IMR-90 (cell line): ENCODE measurements at regions of chr6 and their contacts with region 1.

Region 1: DNA sequence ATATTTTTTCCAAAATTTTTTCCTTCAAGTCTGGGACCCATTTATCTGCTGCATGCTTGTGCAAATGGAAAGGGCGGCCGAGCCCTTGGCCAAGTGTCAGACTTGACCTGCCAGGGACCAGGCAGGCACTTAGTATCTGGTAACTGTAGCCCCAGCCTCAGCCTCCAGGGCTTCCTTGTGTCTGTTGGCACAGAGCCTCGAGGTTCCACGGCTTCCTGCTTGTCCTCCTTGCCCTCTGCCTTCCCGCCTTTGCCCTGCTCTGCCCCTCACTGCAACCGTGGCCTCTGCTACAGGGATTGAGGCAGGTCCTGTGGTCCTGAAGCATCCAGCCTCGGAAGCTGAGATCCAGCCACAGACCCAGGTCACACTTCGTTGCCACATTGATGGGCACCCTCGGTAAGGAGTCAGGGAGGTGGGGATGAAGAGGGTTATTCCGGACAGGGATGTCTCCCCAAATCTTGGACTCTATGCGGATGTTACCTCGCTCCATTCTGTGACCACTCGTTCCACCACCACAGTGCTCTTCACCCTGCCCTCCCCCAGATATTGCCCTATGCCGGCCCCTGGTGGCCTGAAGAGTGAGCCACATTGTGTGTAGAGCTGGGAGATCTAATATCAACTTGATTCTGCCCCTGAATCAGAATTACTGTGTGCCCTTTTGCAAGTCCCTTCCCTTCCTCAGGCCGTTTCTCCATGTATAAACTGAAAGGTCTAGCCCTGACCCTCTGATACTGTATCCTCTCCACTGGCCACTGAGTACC is 41.5 kb upstream of the SRF start:
- DNase-seq: peak; percentile 35
- ATAC-seq: peak; percentile 82
- H3K4me3 ChIP-seq: no peak overlapping the region
- H3K27ac ChIP-seq: no peak overlapping the region
- H3K4me1 ChIP-seq: peaks cover 26% of the 10 kb centered on the region
- H3K27me3 ChIP-seq: no peaks in the 10 kb centered on the region
- CTCF ChIP-seq: peak; percentile 77
- POLR2A ChIP-seq: no peak
- RAD21 ChIP-seq: peak; percentile 91

Region 2: GRCh38 chr6:43070028-43070632 is 59.5 kb before region 1 on chr6:
- CTCF ChIA-PET with region 1: interaction called, 4 read pairs
- POLR2A ChIA-PET with region 1: no interaction called
- dilution Hi-C with region 1: no loop called
- in situ Hi-C with region 1: loop called (anchors 5 kb)
- intact Hi-C with region 1: loop called (anchors 1 kb)
- DNase-seq: peak; percentile 76
- ATAC-seq: peak; percentile 89
- H3K4me3 ChIP-seq: no peak overlapping the region
- H3K27ac ChIP-seq: no peak overlapping the region
- H3K4me1 ChIP-seq: peaks cover 12% of the 10 kb centered on the region
- H3K27me3 ChIP-seq: no peaks in the 10 kb centered on the region
- CTCF ChIP-seq: peak; percentile 87
- POLR2A ChIP-seq: no peak
- RAD21 ChIP-seq: peak; percentile 90